ENCODE measurements at regions of chr3 and their contacts with region 1.

Region 1: DNA sequence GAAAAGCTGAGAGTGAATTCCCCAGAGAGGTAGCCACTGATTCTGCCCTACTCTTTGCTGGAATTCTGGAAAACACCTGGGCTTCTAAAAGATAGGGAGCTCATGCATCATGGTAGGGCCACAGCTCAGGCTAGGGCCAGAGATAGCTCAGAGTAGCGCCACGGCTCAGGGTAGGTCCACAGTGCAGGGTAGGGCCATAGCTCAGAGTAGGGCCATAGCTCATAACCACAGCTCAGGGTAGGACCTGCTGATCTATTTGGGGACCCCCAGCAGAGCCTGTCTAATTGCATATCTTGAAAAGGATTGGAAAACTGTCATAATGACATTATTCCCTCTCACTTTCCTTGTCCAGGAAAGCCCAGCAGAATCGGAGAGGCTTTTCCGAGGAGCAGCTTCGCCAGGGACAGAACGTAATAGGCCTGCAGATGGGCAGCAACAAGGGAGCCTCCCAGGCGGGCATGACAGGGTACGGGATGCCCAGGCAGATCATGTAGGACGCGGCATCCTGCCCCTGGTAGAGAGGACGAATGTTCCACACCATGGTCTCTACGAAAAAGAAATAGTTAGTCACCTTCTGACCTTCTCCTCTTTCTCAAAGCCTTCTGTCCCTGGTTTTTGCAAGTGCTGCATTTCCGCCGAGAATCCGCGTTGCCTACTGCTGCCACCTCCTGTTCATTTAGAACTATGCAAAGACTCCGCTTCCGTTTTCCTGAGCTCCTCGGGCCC is 14.5 kb downstream of the TAGLN3 start:
- DNase-seq: peak; percentile 57
- ATAC-seq: peak; percentile 90
- H3K4me3 Mint-ChIP-seq: no peak overlapping the region
- H3K27ac Mint-ChIP-seq: no peak overlapping the region
- H3K4me1 Mint-ChIP-seq: peaks cover 9% of the 10 kb centered on the region; the same call in 1 of the 2 replicates
- H3K27me3 Mint-ChIP-seq: no peaks in the 10 kb centered on the region
- CTCF ChIP-seq: 0 out of 2 replicates have a peak, but pooled peaks have one; percentile 41

Region 2: DNA sequence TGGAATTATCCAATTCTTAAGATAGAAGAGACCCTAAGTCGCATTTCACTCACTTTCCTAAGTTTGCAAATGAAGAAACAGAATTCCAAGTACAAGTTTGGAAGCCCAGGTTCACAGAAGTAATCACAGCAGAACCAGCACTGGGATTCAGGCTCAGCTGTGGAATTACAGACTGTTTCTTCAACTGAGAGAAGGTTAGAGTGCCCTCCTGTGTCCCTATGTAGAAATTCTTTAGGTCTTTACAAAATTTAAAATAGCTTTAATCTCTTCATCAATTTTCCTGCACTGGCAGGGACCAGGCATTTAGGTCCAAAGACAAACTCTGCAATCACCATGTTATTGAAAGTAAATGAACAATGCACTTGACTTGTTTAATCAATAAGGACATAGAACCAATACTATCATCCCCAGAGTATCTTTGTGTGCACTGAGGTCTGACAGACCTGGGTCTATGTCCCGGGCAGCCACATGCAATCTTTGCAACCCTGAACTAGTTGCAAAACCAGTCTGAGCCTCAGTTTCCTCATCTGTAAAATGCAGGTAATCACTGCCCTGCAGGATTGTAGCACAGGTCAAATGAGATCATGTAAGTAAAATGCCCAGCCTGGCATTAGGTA is 321.8 kb before region 1 on chr3:
- CTCF ChIA-PET with region 1: interaction called, 13 read pairs
- POLR2A ChIA-PET with region 1: no interaction called
- DNase-seq: no peak
- ATAC-seq: peak; percentile 82
- H3K4me3 Mint-ChIP-seq: no peak overlapping the region
- H3K27ac Mint-ChIP-seq: no peak overlapping the region
- H3K4me1 Mint-ChIP-seq: peaks cover 10% of the 10 kb centered on the region; the same call in 1 of the 2 replicates
- H3K27me3 Mint-ChIP-seq: no peaks in the 10 kb centered on the region
- CTCF ChIP-seq: no peak

Region 3: DNA sequence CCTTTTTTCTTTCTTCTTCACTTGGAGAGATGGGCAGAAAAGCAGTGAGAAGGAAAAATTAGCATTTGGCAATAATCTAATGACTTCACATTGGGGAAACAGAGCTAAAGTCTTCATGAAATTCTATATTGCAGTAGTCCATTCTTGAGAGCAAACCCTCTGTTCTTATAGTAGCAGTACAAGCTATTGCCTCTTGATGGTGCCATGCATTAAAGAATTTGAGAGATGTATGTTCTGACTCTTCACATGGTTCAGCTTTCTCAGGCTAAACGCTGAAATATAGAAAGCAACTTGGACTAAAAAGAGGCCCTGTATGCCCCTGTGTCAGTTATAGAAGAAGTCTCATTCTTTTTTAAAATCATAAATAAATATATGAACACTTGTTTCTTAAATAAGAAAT is 118.1 kb before region 1 on chr3:
- CTCF ChIA-PET with region 1: interaction called, 15 read pairs
- POLR2A ChIA-PET with region 1: no interaction called
- DNase-seq: no peak
- ATAC-seq: peak; percentile 66
- H3K4me3 Mint-ChIP-seq: no peak overlapping the region
- H3K27ac Mint-ChIP-seq: no peak overlapping the region
- H3K4me1 Mint-ChIP-seq: no peaks in the 10 kb centered on the region
- H3K27me3 Mint-ChIP-seq: no peaks in the 10 kb centered on the region
- CTCF ChIP-seq: no peak

Region 4: GRCh38 chr3:111989061-111989678 is 24.1 kb before region 1 on chr3:
- CTCF ChIA-PET with region 1: interaction called, 150 read pairs
- POLR2A ChIA-PET with region 1: interaction called, 4 read pairs
- DNase-seq: no peak
- ATAC-seq: peak; percentile 80
- H3K4me3 Mint-ChIP-seq: no peak overlapping the region
- H3K27ac Mint-ChIP-seq: no peak overlapping the region
- H3K4me1 Mint-ChIP-seq: peaks cover 4% of the 10 kb centered on the region
- H3K27me3 Mint-ChIP-seq: no peaks in the 10 kb centered on the region
- CTCF ChIP-seq: no peak

Region 5: GRCh38 chr3:112032098-112032731 is 19.0 kb after region 1 on chr3:
- CTCF ChIA-PET with region 1: interaction called, 14 read pairs
- POLR2A ChIA-PET with region 1: no interaction called
- DNase-seq: no peak
- ATAC-seq: no peak
- H3K4me3 Mint-ChIP-seq: no peak overlapping the region
- H3K27ac Mint-ChIP-seq: no peak overlapping the region
- H3K4me1 Mint-ChIP-seq: peaks cover 7% of the 10 kb centered on the region
- H3K27me3 Mint-ChIP-seq: no peaks in the 10 kb centered on the region
- CTCF ChIP-seq: no peak

Measured in WTC11 (cell line).